Heart left ventricle (tissue), 16 donors: ENCODE measurements at regions of chr15 and their contacts with region 1.

Region 1: GRCh38 chr15:52924630-52925029 is 134.5 kb upstream of the ONECUT1 start:
- DNase-seq: no peak
- ATAC-seq: no peak
- H3K4me3 ChIP-seq: no peak overlapping the region
- H3K27ac ChIP-seq: no peak overlapping the region
- H3K4me1 ChIP-seq: no peaks in the 10 kb centered on the region
- H3K27me3 ChIP-seq: peaks cover 0 to 6% (median 0%) of the 10 kb centered on the region in 9 donors
- CTCF ChIP-seq: no peak
- POLR2A ChIP-seq: no peak

Region 2: GRCh38 chr15:52834379-52834778 is 90.3 kb before region 1 on chr15:
- intact Hi-C with region 1: no loop called
- DNase-seq: no peak
- ATAC-seq: no peak
- H3K4me3 ChIP-seq: no peak overlapping the region
- H3K27ac ChIP-seq: no peak overlapping the region
- H3K4me1 ChIP-seq: no peaks in the 10 kb centered on the region
- H3K27me3 ChIP-seq: no peaks in the 10 kb centered on the region
- CTCF ChIP-seq: no peak
- POLR2A ChIP-seq: no peak

Region 3: GRCh38 chr15:52984507-52984906 is 59.9 kb after region 1 on chr15:
- intact Hi-C with region 1: loop called in 1 of 10 experiments (anchors 10 kb)
- DNase-seq: no peak
- ATAC-seq: no peak
- H3K4me3 ChIP-seq: no peak overlapping the region
- H3K27ac ChIP-seq: no peak overlapping the region
- H3K4me1 ChIP-seq: no peaks in the 10 kb centered on the region
- H3K27me3 ChIP-seq: no peaks in the 10 kb centered on the region
- CTCF ChIP-seq: no peak
- POLR2A ChIP-seq: no peak